B cell (primary cell): ENCODE measurements at regions of chr2 and their contacts with region 1.

Region 1: DNA sequence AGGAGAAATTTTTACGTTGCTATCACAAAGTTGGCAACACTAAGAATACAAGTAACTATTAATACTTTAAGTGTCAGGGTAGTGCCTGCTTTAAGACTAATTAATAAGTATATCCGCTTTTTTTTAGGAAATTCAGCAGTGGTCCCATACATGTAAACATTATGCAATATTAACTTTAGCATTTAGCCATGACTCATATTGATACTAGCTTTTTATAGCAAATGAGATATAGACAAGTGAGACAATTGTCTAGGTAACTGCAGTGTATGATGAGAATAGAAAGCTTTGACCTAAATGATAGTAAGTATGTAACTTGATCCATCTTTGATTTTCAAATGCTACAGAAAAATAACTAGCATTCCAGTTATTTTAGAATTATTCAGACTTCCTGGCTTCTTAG is 27.4 kb upstream of the VRK2 start:
- DNase-seq: no peak
- ATAC-seq: no peak
- H3K4me3 ChIP-seq: no peak overlapping the region
- H3K4me3 Mint-ChIP-seq: no peak overlapping the region
- H3K27ac ChIP-seq: no peak overlapping the region
- H3K27ac Mint-ChIP-seq: no peak overlapping the region
- H3K4me1 ChIP-seq: peaks cover 9 to 15% of the 10 kb centered on the region in 2 donors
- H3K4me1 Mint-ChIP-seq: peaks cover 19% of the 10 kb centered on the region
- H3K27me3 ChIP-seq: no peaks in the 10 kb centered on the region
- H3K27me3 Mint-ChIP-seq: no peaks in the 10 kb centered on the region
- CTCF ChIP-seq: no peak

Region 2: GRCh38 chr2:58032016-58032763 is 13.0 kb after region 1 on chr2:
- CTCF ChIA-PET with region 1: no interaction called
- POLR2A ChIA-PET with region 1: no interaction called
- intact Hi-C with region 1: loop called (anchors 1 kb)
- DNase-seq: peak; percentile 78
- ATAC-seq: peak; percentile 94
- H3K4me3 ChIP-seq: peak overlapping the region in 1 of 5 experiments; percentile 5
- H3K4me3 Mint-ChIP-seq: peak overlapping the region; percentile 27
- H3K27ac ChIP-seq: peak overlapping the region in 1 of 2 donors; percentile 40
- H3K27ac Mint-ChIP-seq: peak overlapping the region; percentile 74
- H3K4me1 ChIP-seq: peaks cover 27 to 35% of the 10 kb centered on the region in 2 donors
- H3K4me1 Mint-ChIP-seq: peaks cover 50% of the 10 kb centered on the region
- H3K27me3 ChIP-seq: no peaks in the 10 kb centered on the region
- H3K27me3 Mint-ChIP-seq: no peaks in the 10 kb centered on the region
- CTCF ChIP-seq: no peak

Region 3: GRCh38 chr2:58419983-58420382 is 400.8 kb after region 1 on chr2:
- CTCF ChIA-PET with region 1: no interaction called
- POLR2A ChIA-PET with region 1: no interaction called
- intact Hi-C with region 1: no loop called
- DNase-seq: no peak
- ATAC-seq: no peak
- H3K4me3 ChIP-seq: no peak overlapping the region
- H3K4me3 Mint-ChIP-seq: no peak overlapping the region
- H3K27ac ChIP-seq: no peak overlapping the region
- H3K27ac Mint-ChIP-seq: no peak overlapping the region
- H3K4me1 ChIP-seq: no peaks in the 10 kb centered on the region
- H3K4me1 Mint-ChIP-seq: no peaks in the 10 kb centered on the region
- H3K27me3 ChIP-seq: no peaks in the 10 kb centered on the region
- H3K27me3 Mint-ChIP-seq: peaks cover 7% of the 10 kb centered on the region
- CTCF ChIP-seq: no peak